H1 (cell line): ENCODE measurements at regions of chr3 and their contacts with region 1.

Region 1: GRCh38 chr3:42613462-42613861 is 13.0 kb downstream of the NKTR start:
- DNase-seq: no peak
- H3K4me3 ChIP-seq: no peak overlapping the region
- H3K27ac ChIP-seq: no peak overlapping the region
- H3K4me1 ChIP-seq: no peaks in the 10 kb centered on the region
- H3K27me3 ChIP-seq: no peaks in the 10 kb centered on the region
- CTCF ChIP-seq: peak in 1 of 3 experiments; percentile 50; a peak in 1 of 4 replicates
- EP300 ChIP-seq: no peak
- POLR2A ChIP-seq: no peak
- RAD21 ChIP-seq: no peak

Region 2: GRCh38 chr3:42518800-42519567 is 94.5 kb before region 1 on chr3:
- CTCF ChIA-PET with region 1: no interaction called
- POLR2A ChIA-PET with region 1: no interaction called
- DNase-seq: peak in 1 of 2 experiments; percentile 85
- H3K4me3 ChIP-seq: no peak overlapping the region
- H3K27ac ChIP-seq: no peak overlapping the region
- H3K4me1 ChIP-seq: no peaks in the 10 kb centered on the region
- H3K27me3 ChIP-seq: no peaks in the 10 kb centered on the region
- CTCF ChIP-seq: peak; percentile 65 to 80 (median 69)
- EP300 ChIP-seq: no peak
- POLR2A ChIP-seq: no peak
- RAD21 ChIP-seq: peak; percentile 60 to 71

Region 3: GRCh38 chr3:42572278-42572677 is 41.2 kb before region 1 on chr3:
- CTCF ChIA-PET with region 1: interaction called, 20 read pairs
- POLR2A ChIA-PET with region 1: interaction called, 3 read pairs
- DNase-seq: peak in 1 of 2 experiments; percentile 74
- H3K4me3 ChIP-seq: no peak overlapping the region
- H3K27ac ChIP-seq: no peak overlapping the region
- H3K4me1 ChIP-seq: no peaks in the 10 kb centered on the region
- H3K27me3 ChIP-seq: no peaks in the 10 kb centered on the region
- CTCF ChIP-seq: peak; percentile 71 to 89 (median 78)
- EP300 ChIP-seq: no peak
- POLR2A ChIP-seq: no peak
- RAD21 ChIP-seq: peak; percentile 77 to 79

Region 4: GRCh38 chr3:42581709-42582473 is 31.6 kb before region 1 on chr3 and contains the start of gene SEC22C:
- CTCF ChIA-PET with region 1: interaction called, 9 read pairs
- POLR2A ChIA-PET with region 1: interaction called, 16 read pairs
- DNase-seq: peak; percentile 88 to 96
- H3K4me3 ChIP-seq: peak within 1 kb of the TSS; percentile 70 to 94 (median 86)
- H3K27ac ChIP-seq: peak within 1 kb of the TSS; percentile 77
- H3K4me1 ChIP-seq: peaks cover 2 to 14% (median 5%) of the 10 kb centered on the region in 4 experiments; a peak in 6 of 7 replicates
- H3K27me3 ChIP-seq: no peaks in the 10 kb centered on the region
- CTCF ChIP-seq: peak; percentile 28 to 47 (median 40); a peak in 3 of 4 replicates
- EP300 ChIP-seq: 0 out of 3 replicates have a peak, but pooled peaks of 1 of the 2 experiments have one; percentile 1
- POLR2A ChIP-seq: peak; percentile 81 to 85
- RAD21 ChIP-seq: peak; percentile 60; a peak in 3 of 4 replicates
- total RNA-seq, gene SEC22C: 38.3 and 38.5 TPM in 2 replicates

Region 5: DNA sequence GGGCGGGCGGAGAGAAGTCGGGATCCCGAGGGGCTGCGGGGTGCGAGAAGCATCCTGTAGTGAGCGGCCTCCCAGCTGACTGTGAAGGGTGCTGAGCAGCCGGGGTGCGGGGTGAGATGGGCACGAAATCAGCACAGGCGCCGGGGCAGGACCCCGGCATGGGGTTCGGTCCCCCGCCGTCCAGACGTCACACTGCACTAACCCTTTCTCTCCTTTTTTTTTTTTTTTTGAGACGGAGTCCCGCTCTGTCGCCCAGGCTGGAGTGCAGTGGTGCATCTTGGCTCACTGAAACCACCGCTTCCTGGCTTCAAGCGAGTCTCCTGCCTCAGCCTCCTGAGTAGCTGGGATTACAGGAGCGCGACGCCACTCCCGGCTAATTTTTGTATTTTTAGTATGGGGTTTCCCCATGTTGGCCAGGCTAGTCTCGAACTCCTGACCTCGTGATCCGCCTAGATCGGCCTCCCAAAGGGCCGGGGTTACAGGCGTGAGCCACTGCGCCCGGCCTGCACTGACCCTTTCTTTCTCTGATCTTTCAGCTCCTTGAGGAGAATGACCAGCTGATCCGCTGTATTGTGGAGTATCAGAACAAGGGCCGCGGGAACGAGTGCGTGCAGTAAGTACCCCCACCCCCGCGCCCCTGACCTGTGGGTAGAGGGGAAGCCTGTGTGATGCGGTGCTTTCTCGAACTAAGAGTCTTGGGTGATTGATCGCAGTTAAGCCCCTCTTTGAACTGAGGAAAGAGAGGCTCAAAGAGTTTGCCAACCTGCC is 22.3 kb before region 1 on chr3:
- CTCF ChIA-PET with region 1: interaction called, 7 read pairs
- POLR2A ChIA-PET with region 1: interaction called, 13 read pairs
- DNase-seq: no peak
- H3K4me3 ChIP-seq: peak overlapping the region; percentile 58 to 76 (median 71)
- H3K27ac ChIP-seq: peak overlapping the region; percentile 45; the same call in 1 of the 2 replicates
- H3K4me1 ChIP-seq: peaks cover 6 to 16% (median 11%) of the 10 kb centered on the region in 4 experiments; a peak in 6 of 7 replicates
- H3K27me3 ChIP-seq: no peaks in the 10 kb centered on the region
- CTCF ChIP-seq: no peak
- EP300 ChIP-seq: no peak
- POLR2A ChIP-seq: no peak
- RAD21 ChIP-seq: no peak

Region 6: GRCh38 chr3:42600111-42600988 is 13.1 kb before region 1 on chr3 and contains the start of gene NKTR:
- CTCF ChIA-PET with region 1: interaction called, 26 read pairs
- POLR2A ChIA-PET with region 1: interaction called, 45 read pairs
- DNase-seq: peak; percentile 98 to 100
- H3K4me3 ChIP-seq: peak within 1 kb of the TSS; percentile 77 to 91 (median 88)
- H3K27ac ChIP-seq: peak within 1 kb of the TSS; percentile 91
- H3K4me1 ChIP-seq: peaks cover 0 to 6% (median 3%) of the 10 kb centered on the region in 4 experiments; a peak in 5 of 7 replicates
- H3K27me3 ChIP-seq: no peaks in the 10 kb centered on the region
- CTCF ChIP-seq: 0 out of 4 replicates have a peak, but pooled peaks of 1 of the 3 experiments have one; percentile 19
- EP300 ChIP-seq: no peak
- POLR2A ChIP-seq: peak; percentile 92 to 96
- RAD21 ChIP-seq: no peak
- total RNA-seq, gene NKTR: 56.6 and 62.2 TPM in 2 replicates

Region 7: DNA sequence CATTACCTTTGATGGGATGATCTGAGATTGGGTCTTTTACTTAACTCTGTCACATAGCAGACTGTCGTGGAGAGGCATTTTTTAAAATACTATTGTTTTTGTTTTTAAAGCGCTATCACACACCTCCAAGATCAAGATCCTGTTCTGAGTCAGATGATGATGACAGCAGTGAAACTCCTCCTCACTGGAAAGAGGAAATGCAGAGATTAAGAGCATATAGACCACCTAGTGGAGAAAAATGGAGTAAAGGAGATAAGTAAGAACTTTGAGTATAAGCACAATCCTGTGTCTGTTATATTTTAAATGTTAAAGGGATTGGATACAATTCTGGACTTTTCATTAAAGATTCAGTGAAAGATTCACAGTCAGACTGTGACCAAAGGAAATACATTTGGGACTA is 21.6 kb after region 1 on chr3:
- CTCF ChIA-PET with region 1: interaction called, 12 read pairs
- POLR2A ChIA-PET with region 1: interaction called, 6 read pairs
- DNase-seq: no peak
- H3K4me3 ChIP-seq: no peak overlapping the region
- H3K27ac ChIP-seq: no peak overlapping the region
- H3K4me1 ChIP-seq: peaks cover 0 to 12% (median 9%) of the 10 kb centered on the region in 4 experiments; a peak in 5 of 7 replicates
- H3K27me3 ChIP-seq: no peaks in the 10 kb centered on the region
- CTCF ChIP-seq: peak in 1 of 3 experiments; percentile 21; a peak in 1 of 4 replicates
- EP300 ChIP-seq: no peak
- POLR2A ChIP-seq: no peak
- RAD21 ChIP-seq: peak in 1 of 2 experiments; percentile 3; a peak in 1 of 4 replicates

Region 8: DNA sequence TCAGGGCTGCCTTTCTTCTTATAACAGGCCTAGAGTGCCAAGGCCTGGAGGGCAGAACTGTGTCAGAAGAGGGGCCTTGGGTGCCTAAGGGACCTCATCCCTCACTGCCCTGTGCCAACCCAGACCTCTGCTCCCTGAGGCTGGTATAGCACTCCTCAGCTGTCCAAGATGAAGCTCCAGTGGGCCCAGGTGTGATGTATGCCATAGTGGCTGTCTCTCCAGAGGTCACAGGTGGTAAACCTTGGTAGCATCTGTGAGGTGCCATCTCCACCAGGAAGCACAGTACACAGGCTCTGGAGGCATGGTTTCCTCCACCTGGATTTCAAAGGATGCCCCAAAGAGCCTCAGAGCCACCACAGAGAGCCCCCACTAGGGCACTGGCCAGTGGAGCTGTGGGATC is 59.6 kb after region 1 on chr3:
- CTCF ChIA-PET with region 1: no interaction called
- POLR2A ChIA-PET with region 1: no interaction called
- DNase-seq: no peak
- H3K4me3 ChIP-seq: no peak overlapping the region
- H3K27ac ChIP-seq: no peak overlapping the region
- H3K4me1 ChIP-seq: no peaks in the 10 kb centered on the region; a peak in 1 of 7 replicates
- H3K27me3 ChIP-seq: peaks cover 0 to 2% (median 0%) of the 10 kb centered on the region in 4 experiments; a peak in 2 of 7 replicates
- CTCF ChIP-seq: no peak
- EP300 ChIP-seq: no peak
- POLR2A ChIP-seq: no peak
- RAD21 ChIP-seq: no peak